ENCODE measurements at regions of chr3 and their contacts with region 1.

Region 1: DNA sequence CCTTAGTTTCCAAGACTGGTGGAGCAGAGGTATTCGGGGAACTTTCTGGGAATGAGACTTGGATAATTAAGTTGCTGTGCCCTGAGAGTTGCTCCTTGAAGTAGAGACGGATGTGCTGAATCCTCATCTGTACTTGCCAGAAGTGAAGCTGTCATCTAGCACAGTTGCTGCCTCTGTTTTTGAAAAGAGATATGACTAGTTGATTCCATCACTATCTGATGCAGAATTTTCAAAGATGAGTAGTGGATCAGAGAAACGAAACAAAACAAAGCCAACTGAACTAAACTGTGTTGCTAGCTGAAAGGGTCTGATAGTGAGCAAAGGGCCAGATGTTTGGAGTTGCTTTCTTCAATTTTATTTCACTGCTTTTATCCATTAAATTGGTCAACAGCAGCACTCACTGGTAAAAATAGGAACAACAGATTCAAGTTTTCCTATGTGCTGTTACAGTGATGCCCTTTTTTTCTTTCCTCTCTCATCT is 52.7 kb downstream of the MITF start:
- DNase-seq: peak; percentile 35
- H3K4me3 ChIP-seq: no peak overlapping the region
- H3K27ac ChIP-seq: no peak overlapping the region
- H3K4me1 ChIP-seq: peaks cover 21% of the 10 kb centered on the region
- H3K27me3 ChIP-seq: no peaks in the 10 kb centered on the region
- CTCF ChIP-seq: peak; percentile 59 to 71

Region 2: GRCh38 chr3:69161587-69162307 is 630.2 kb before region 1 on chr3:
- CTCF ChIA-PET with region 1: no interaction called
- dilution Hi-C with region 1: no loop called
- in situ Hi-C with region 1: no loop called
- intact Hi-C with region 1: loop called (anchors 5 kb)
- DNase-seq: peak; percentile 47
- H3K4me3 ChIP-seq: no peak overlapping the region
- H3K27ac ChIP-seq: no peak overlapping the region
- H3K4me1 ChIP-seq: no peaks in the 10 kb centered on the region
- H3K27me3 ChIP-seq: no peaks in the 10 kb centered on the region
- CTCF ChIP-seq: peak; percentile 90 to 93

Region 3: DNA sequence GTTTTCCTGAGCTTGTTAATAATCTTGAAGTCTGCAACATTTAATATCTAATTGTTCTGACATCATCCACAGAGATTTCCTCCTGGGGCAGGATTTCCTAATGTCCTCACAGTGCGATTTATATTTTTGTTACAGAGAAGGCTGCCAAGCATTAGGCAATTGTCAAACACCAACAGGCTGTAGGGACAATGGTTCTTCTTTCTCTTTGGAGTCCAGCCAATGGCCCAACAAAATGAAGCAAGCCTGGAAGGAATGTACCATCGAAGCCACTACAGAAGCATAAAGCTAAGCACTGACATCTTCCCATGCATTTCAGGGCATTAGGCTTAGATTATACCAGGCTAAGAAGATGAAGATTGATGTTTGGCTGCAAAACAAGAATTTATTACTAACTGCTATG is 233.0 kb before region 1 on chr3:
- CTCF ChIA-PET with region 1: interaction called, 15 read pairs
- dilution Hi-C with region 1: no loop called
- in situ Hi-C with region 1: no loop called
- intact Hi-C with region 1: no loop called
- DNase-seq: peak; percentile 57
- H3K4me3 ChIP-seq: no peak overlapping the region
- H3K27ac ChIP-seq: no peak overlapping the region
- H3K4me1 ChIP-seq: no peaks in the 10 kb centered on the region
- H3K27me3 ChIP-seq: no peaks in the 10 kb centered on the region
- CTCF ChIP-seq: no peak

Region 4: DNA sequence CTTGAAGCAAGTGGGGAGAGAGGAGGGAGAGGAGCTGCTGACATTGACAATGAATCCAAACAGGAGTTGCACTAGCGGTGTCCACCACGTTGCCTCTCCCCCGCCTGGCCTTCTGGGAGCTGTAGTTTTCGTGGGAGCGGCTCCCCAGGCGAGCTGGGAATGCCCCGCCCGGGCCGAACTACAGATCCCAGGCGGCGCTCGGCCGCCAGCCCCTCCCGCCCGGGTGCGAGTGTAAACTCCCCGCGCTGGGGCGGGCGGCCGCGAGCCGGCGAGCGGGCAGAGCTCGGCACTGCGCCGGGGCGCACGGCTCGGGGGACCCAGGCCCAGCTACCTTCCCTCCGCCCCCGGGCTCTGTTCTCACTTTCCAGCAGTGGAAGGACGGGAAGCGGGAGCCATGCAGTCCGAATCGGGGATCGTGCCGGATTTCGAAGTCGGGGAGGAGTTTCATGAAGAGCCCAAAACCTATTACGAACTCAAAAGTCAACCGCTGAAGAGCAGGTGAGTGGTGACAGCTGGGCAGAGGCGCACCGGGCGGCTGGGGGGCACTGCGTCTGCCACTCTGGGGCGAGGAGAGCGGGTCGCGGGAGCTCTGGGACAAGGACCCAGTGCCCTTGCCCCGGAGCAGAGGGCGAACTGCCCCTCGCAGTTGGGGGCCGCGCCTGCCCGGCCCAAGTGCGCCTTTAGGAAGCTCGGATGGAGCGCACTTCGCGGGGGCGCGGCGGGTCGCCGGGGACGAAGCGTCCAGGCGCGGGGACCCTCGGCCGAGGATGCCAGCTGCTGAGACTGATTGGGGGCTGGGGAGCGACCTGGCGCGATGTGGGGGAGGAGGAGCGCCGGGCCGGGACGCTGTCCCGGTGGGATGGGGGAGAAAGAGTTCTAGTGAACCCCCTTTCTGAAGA is 52.5 kb before region 1 on chr3 and contains the start of gene MITF:
- CTCF ChIA-PET with region 1: no interaction called
- dilution Hi-C with region 1: no loop called
- in situ Hi-C with region 1: no loop called
- intact Hi-C with region 1: loop called (anchors 1 kb)
- DNase-seq: peak; percentile 90
- H3K4me3 ChIP-seq: peak within 1 kb of the TSS; percentile 85 to 98 (median 85)
- H3K27ac ChIP-seq: no peak within 1 kb of the TSS
- H3K4me1 ChIP-seq: peaks cover 10% of the 10 kb centered on the region
- H3K27me3 ChIP-seq: no peaks in the 10 kb centered on the region
- CTCF ChIP-seq: peak in 1 of 2 donors; percentile 0
- total RNA-seq, gene MITF: 5.7 to 8.3 TPM

Region 5: GRCh38 chr3:69948246-69948862 is 156.4 kb after region 1 on chr3:
- CTCF ChIA-PET with region 1: no interaction called
- dilution Hi-C with region 1: no loop called
- in situ Hi-C with region 1: no loop called
- intact Hi-C with region 1: loop called (anchors 2 kb)
- DNase-seq: peak; percentile 9
- H3K4me3 ChIP-seq: no peak overlapping the region
- H3K27ac ChIP-seq: no peak overlapping the region
- H3K4me1 ChIP-seq: no peaks in the 10 kb centered on the region
- H3K27me3 ChIP-seq: no peaks in the 10 kb centered on the region
- CTCF ChIP-seq: peak; percentile 43 to 57

Measured in mammary epithelial cell (primary cell).